Psoas muscle (tissue), 8 donors: ENCODE measurements at regions of chr7 and their contacts with region 1.

Region 1: DNA sequence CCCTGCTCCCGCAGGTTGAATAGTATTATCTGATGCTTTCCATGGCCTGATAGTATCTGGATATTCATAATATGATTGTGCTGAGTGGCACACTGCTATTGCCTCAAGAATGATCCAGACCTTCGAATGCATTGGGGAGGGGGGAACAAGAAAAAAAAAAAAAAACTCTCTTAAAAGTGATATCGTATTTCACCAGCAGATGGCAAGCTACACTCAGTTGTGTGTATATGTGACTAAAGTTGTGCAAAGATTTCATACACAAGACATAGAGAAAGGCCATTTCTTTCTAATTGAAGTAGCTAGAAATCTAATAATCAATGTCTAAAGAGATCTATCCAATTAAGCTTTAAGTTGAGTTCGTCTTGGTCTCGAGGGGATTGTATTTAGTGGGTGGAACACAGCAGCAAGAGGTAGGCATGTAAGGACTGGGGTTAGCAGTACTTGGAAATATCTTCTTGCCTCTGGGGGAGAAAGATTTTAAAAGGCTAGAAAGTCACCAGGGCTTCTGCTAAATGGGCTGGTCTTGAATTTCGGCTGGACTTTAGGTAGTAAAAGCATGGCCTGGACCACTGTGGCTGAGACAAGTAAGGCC is 15.3 kb downstream of the SFRP4 start:
- DNase-seq: no peak
- ATAC-seq: peak in 3 of 4 donors; percentile 35 to 76 (median 55)
- H3K4me3 ChIP-seq: no peak overlapping the region
- H3K27ac ChIP-seq: no peak overlapping the region
- H3K4me1 ChIP-seq: peaks cover 4% of the 10 kb centered on the region
- H3K27me3 ChIP-seq: no peaks in the 10 kb centered on the region
- CTCF ChIP-seq: peak; percentile 57

Region 2: DNA sequence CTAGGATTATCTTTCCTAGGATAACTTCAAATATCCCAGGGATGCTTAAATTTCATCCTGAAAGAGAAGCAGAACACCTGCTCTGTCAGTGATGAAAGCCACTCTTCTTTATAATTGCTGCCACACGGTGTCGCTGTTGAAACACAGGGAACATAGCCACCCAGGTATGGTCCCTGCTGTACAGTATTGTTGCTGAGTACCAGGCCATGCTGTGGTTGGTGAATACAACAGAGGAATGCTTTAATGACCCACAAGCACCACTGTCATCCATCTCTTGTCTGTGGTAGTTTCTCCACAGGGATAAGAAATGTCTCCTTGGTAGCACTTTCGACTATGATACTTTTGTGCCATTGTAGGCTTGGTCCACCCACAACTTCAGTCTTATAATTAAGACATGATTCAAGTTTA is 206.2 kb after region 1 on chr7:
- intact Hi-C with region 1: loop called (anchors 5 kb)
- DNase-seq: peak; percentile 17 to 52
- ATAC-seq: peak; percentile 67 to 89 (median 74)
- H3K4me3 ChIP-seq: no peak overlapping the region
- H3K27ac ChIP-seq: no peak overlapping the region
- H3K4me1 ChIP-seq: no peaks in the 10 kb centered on the region
- H3K27me3 ChIP-seq: no peaks in the 10 kb centered on the region
- CTCF ChIP-seq: peak; percentile 80

Region 3: DNA sequence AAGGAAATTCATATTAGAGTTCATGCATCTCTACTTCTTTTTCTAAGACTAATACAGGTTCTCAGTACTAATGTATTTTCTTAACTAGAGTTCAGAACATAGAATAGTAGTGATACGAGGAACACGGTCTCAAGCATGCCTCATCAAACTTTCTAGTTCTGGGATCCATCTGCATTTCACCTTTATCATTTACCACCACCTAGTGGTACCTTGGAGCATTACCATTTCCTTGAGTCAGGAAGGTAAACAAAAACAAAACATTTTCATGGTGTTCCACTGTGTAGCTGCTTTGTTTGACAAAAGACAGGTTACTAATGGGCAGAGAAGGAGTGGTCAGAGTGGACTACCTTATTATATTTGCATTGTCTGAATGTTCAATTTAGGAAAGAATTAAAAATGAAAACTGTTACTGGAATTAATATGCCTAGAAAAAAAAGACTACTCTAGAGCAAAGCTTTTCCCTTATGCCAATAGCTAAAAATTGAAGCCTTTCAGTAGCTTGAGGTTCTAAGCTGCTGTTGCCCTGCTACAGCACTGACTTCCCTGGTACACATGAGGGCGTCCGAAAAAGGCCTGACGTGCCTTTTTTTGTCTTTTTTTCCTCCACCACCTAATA is 321.3 kb after region 1 on chr7:
- intact Hi-C with region 1: loop called (anchors 2 to 5 kb)
- DNase-seq: no peak
- ATAC-seq: peak; percentile 75 to 95 (median 88)
- H3K4me3 ChIP-seq: no peak overlapping the region
- H3K27ac ChIP-seq: no peak overlapping the region
- H3K4me1 ChIP-seq: no peaks in the 10 kb centered on the region
- H3K27me3 ChIP-seq: no peaks in the 10 kb centered on the region
- CTCF ChIP-seq: peak; percentile 93

Region 4: GRCh38 chr7:38229386-38229785 is 328.1 kb after region 1 on chr7:
- intact Hi-C with region 1: loop called in 1 of 2 experiments (anchors 5 kb)
- DNase-seq: no peak
- ATAC-seq: no peak
- H3K4me3 ChIP-seq: no peak overlapping the region
- H3K27ac ChIP-seq: no peak overlapping the region
- H3K4me1 ChIP-seq: no peaks in the 10 kb centered on the region
- H3K27me3 ChIP-seq: no peaks in the 10 kb centered on the region
- CTCF ChIP-seq: no peak

Region 5: GRCh38 chr7:38369816-38370493 is 468.6 kb after region 1 on chr7:
- intact Hi-C with region 1: loop called in 1 of 2 experiments (anchors 10 kb)
- DNase-seq: peak; percentile 87 to 89
- ATAC-seq: peak; percentile 65 to 88 (median 83)
- H3K4me3 ChIP-seq: peak overlapping the region; percentile 44
- H3K27ac ChIP-seq: no peak overlapping the region
- H3K4me1 ChIP-seq: no peaks in the 10 kb centered on the region
- H3K27me3 ChIP-seq: no peaks in the 10 kb centered on the region
- CTCF ChIP-seq: peak; percentile 68